Calu3 (cell line): ENCODE measurements at regions of chr18 and their contacts with region 1.

Region 1: GRCh38 chr18:1954583-1955312 is 616.6 kb downstream of the METTL4 start:
- DNase-seq: no peak
- H3K4me3 Mint-ChIP-seq: no peak overlapping the region
- H3K27ac Mint-ChIP-seq: no peak overlapping the region
- H3K4me1 Mint-ChIP-seq: no peaks in the 10 kb centered on the region
- H3K27me3 Mint-ChIP-seq: no peaks in the 10 kb centered on the region
- CTCF ChIP-seq: no peak

Region 2: GRCh38 chr18:1907807-1908206 is 46.9 kb before region 1 on chr18:
- CTCF ChIA-PET with region 1: no interaction called
- intact Hi-C with region 1: loop called (anchors 1 kb)
- DNase-seq: no peak
- H3K4me3 Mint-ChIP-seq: no peak overlapping the region
- H3K27ac Mint-ChIP-seq: no peak overlapping the region
- H3K4me1 Mint-ChIP-seq: no peaks in the 10 kb centered on the region
- H3K27me3 Mint-ChIP-seq: no peaks in the 10 kb centered on the region
- CTCF ChIP-seq: no peak

Region 3: DNA sequence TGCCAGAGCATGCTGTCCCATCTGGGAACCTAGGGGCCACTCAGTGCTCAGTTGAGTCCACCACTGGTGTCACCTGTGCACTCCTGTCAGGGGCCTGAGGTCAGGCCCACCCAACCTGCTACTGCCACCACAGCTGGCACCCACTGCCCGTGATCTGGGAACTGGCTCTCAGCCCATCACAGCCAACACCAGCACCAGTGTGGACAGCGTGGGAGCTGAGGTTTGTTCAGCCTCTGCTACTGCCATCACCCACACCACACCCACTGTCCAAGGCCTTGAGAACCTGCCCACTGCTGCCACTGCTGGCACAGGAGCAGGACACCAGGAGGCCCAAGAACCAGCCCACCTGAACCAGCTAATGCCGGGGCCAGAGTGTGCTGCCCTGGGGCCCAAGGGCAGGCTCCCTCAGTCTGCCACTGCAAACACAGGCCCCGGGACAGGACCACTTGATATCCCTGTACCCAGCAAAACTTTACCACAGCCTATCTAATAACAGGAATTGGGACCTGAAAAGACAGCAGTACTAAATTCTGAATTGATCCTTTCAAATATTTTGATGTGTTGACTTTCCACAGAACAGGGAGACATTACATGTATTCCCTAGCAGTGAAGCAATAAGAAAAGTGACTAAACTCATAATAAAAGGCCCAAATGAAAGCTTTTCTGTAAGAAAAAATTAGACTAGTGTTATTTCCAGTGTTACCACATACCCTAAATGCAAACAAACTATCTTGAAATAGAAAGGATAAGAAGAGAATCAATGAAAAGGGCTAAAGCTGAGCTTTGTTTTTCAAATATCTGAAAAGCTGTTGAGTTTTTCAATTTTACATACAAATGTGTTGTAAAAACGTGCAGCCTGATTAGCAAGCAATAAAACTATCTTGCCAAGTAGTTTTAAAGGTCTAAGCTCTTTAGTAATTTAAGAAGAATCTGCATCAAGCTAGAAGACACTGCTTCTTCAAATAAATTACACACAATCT is 24.2 kb before region 1 on chr18:
- CTCF ChIA-PET with region 1: no interaction called
- intact Hi-C with region 1: no loop called
- DNase-seq: no peak
- H3K4me3 Mint-ChIP-seq: no peak overlapping the region
- H3K27ac Mint-ChIP-seq: no peak overlapping the region
- H3K4me1 Mint-ChIP-seq: no peaks in the 10 kb centered on the region
- H3K27me3 Mint-ChIP-seq: no peaks in the 10 kb centered on the region
- CTCF ChIP-seq: no peak

Region 4: DNA sequence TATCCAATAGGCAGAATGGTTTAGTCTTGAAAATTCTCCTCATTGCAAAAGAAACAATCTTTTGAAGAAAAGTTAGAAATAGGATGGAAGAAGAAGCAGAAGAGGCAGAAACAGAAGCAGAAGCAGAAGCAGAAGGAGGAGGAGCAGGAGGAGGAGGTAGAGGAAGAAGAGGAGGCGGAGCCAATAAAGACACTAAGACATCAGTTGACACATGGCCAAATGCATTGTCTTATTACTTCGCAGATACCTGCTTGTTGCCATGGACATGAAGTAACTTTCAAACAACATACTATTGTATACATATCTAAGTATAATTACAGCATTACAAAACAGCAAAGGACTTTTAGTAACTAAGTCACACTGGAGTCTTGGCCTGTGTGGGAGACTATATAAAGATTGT is 10.3 kb after region 1 on chr18:
- CTCF ChIA-PET with region 1: no interaction called
- intact Hi-C with region 1: no loop called
- DNase-seq: no peak
- H3K4me3 Mint-ChIP-seq: no peak overlapping the region
- H3K27ac Mint-ChIP-seq: no peak overlapping the region
- H3K4me1 Mint-ChIP-seq: no peaks in the 10 kb centered on the region
- H3K27me3 Mint-ChIP-seq: no peaks in the 10 kb centered on the region
- CTCF ChIP-seq: no peak